Dorsolateral prefrontal cortex (tissue), 120 donors: ENCODE measurements at regions of chr1 and their contacts with region 1.

Region 1: GRCh38 chr1:15046487-15047165 is 106.9 kb upstream of the TMEM51 start:
- DNase-seq: peak; percentile 70 to 88 (median 78)
- H3K4me3 ChIP-seq: no peak overlapping the region
- H3K27ac ChIP-seq: peak overlapping the region in 39 of 59 donors; percentile 0 to 99 (median 48)
- H3K27me3 ChIP-seq: no peaks in the 10 kb centered on the region
- CTCF ChIP-seq: peak; percentile 88 to 99 (median 97)

Region 2: DNA sequence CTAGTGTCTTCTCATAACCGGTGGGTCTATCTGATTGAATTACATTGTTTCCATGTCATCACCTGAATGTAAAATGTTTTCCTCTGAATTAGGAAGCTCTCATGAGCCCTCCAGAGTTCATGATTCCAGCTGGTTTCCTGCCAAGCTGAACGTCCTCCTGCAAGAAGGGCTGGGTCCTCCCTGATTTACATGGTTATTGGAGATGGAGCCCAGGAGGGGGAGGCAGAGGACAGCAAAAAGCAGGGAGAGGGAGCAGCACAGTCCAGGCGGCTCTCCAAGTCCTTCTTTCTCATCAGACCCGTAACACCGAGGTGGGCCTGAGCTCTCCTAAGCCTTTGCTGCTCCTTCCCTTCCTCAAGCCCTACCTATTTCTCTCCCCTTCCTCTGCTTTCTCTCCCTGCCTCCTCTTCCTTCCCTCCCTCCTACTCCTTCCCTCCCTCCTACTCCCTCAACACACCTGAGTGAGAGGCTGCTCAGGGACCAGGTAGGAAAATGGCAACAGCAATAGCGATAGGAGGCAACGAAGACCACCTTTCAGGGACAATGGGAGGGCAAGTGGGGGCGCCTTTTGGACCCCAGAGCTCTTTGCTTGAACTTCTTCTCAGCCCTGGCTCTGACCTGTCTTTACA is 1080.7 kb before region 1 on chr1:
- intact Hi-C with region 1: loop called (anchors 5 to 10 kb)
- DNase-seq: peak; percentile 26 to 83 (median 68)
- H3K4me3 ChIP-seq: no peak overlapping the region
- H3K27ac ChIP-seq: peak overlapping the region in 2 of 59 donors; percentile 9 to 16
- H3K27me3 ChIP-seq: no peaks in the 10 kb centered on the region
- CTCF ChIP-seq: peak in 55 of 56 donors; percentile 24 to 80 (median 61)

Region 3: GRCh38 chr1:14606632-14607031 is 440.0 kb before region 1 on chr1:
- intact Hi-C with region 1: loop called in 1 of 2 experiments (anchors 5 kb)
- DNase-seq: no peak
- H3K4me3 ChIP-seq: no peak overlapping the region
- H3K27ac ChIP-seq: no peak overlapping the region
- H3K27me3 ChIP-seq: peaks cover 0 to under 1% (median 0%) of the 10 kb centered on the region in 45 donors
- CTCF ChIP-seq: peak in 49 of 56 donors; percentile 11 to 68 (median 42)

Region 4: DNA sequence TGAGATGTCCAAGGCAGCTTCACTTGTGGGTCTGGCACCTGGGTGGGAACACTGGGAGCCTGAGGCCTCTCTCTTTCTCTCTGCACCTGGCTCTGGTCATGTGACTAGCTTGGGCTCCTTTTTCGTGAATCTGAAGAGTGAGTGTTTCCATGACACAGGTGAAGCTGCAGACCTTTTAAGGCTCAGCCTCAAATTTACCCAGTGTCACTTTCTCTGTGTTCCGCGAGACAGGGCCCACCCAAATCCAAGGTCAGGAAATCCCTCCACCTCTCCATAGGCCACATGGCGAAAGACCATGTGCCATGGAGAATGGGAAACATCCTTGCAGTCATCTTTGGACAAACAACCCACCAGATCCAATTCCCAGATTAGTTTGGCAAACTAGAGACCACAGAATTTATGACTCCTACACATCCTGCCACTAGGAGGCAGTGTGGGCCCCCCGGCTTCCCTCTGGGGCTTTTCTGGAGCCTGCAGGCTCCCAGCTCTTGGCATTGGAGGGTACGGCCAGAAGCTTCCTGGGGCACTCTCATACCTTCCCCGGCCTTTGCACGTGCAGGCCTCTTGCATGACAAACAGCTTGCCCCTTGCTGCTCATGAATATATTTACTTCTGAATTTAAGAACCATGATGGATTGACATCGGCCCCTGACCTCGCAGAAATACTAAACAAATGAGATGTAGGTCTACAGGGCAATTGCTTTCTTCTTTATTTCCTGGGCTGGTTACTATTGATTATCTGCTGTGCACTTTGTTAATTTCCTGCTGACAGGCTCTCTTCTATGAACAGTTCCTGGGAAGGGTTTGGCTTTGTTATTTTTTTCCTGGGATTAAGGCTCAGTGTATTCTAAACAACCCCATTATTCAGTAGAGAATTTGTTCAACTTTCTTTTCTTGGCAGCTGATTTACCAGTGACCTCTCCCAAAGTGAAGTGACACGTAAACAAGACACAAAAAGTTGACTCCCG is 267.4 kb before region 1 on chr1:
- intact Hi-C with region 1: loop called in 1 of 2 experiments (anchors 2 kb)
- DNase-seq: peak in 2 of 10 donors; percentile 33 to 47
- H3K4me3 ChIP-seq: no peak overlapping the region
- H3K27ac ChIP-seq: no peak overlapping the region
- H3K27me3 ChIP-seq: no peaks in the 10 kb centered on the region
- CTCF ChIP-seq: peak; percentile 43 to 79 (median 68)

Region 5: DNA sequence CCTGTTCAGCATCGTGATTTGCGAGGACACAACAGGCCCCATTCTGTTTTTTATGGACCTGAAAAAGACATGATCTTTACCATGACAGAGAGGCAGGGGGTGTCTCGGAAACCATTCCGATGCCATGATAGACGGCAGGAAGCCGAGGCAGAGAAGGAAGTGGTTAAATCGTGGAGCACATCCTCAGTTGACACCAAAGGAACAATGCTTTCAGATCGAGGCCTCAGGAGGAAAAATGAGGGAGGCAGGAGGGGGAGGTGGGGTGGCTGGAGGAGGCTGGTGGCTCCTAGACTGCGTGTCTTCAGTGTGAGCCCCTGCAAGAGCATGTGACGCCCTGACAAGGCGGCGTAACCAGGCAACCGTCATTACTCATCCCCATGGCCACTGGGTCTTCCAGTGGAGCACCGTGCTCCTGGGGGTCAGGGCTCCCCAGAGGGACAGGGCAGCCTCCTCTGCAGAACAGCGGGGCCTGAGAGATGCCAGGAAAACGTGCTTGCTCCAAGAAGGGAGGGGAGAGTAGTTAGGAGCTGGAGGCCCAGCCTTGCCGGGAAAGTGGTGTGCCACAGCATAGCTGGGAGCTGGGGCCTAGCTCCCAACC is 65.9 kb before region 1 on chr1:
- intact Hi-C with region 1: no loop called
- DNase-seq: no peak
- H3K4me3 ChIP-seq: no peak overlapping the region
- H3K27ac ChIP-seq: peak overlapping the region in 11 of 59 donors; percentile 7 to 45 (median 29)
- H3K27me3 ChIP-seq: no peaks in the 10 kb centered on the region
- CTCF ChIP-seq: no peak

Region 6: DNA sequence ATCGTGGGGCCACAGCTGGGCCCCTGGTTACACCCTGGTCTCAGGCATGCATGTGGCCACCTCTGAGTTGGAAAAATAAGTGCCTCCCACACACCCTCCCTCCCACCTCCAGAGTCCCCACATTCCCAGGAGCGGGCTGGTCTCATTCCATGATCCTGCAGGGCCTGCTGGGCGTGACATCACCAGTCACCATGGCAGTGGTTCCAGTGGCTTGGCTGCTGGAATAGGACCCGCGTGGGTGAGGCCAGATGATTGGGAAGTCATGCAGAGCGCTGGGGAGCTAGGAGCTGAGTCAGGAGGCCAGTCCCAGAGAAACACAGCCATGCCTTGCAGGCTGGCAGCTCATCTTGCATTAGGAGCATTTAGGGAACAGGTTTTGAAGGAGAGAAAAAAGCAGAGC is 18.5 kb before region 1 on chr1:
- intact Hi-C with region 1: loop called in 1 of 2 experiments (anchors 2 kb)
- DNase-seq: peak in 9 of 10 donors; percentile 36 to 89 (median 69)
- H3K4me3 ChIP-seq: peak overlapping the region in 1 of 59 donors; percentile 8
- H3K27ac ChIP-seq: peak overlapping the region; percentile 0 to 89 (median 75)
- H3K27me3 ChIP-seq: no peaks in the 10 kb centered on the region
- CTCF ChIP-seq: no peak

Region 7: DNA sequence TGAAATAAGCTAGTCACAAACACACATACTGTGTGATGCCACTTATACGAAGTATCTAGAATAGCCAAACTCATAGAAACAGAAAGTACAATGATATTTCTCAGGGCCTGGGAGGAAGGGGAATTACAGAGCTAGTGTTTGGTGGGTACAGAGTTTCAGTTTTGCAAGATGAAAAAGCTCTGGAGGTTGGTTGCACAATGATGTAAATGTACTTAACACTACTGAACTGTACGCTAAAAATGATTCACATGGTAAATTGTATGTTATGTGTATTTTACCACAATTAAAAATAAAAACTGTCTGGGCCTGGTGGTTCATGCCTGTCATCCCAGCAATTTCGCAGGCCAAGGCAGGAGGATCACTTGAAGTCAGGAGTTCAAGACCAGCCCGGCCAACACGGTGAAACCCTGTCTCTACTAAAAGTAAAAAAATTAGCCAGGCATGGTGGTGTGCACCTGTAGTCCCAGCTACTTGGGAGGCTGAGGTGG is 185.1 kb after region 1 on chr1:
- intact Hi-C with region 1: no loop called
- DNase-seq: no peak
- H3K4me3 ChIP-seq: no peak overlapping the region
- H3K27ac ChIP-seq: no peak overlapping the region
- H3K27me3 ChIP-seq: no peaks in the 10 kb centered on the region
- CTCF ChIP-seq: no peak